Naive thymus-derived CD4-positive, alpha-beta T cell (primary cell): ENCODE measurements at regions of chr14 and their contacts with region 1.

Region 1: GRCh38 chr14:89767861-89768268 is 186.7 kb downstream of the EFCAB11 start:
- DNase-seq: peak; percentile 14 to 77 (median 66)
- ATAC-seq: peak; percentile 95
- H3K4me3 ChIP-seq: no peak overlapping the region
- H3K4me3 Mint-ChIP-seq: peak overlapping the region in 9 of 10 donors; percentile 39 to 79 (median 72)
- H3K27ac ChIP-seq: no peak overlapping the region
- H3K27ac Mint-ChIP-seq: peak overlapping the region; percentile 45 to 92 (median 85)
- H3K4me1 ChIP-seq: peaks cover 8 to 21% of the 10 kb centered on the region in 2 donors
- H3K4me1 Mint-ChIP-seq: peaks cover 24 to 60% (median 44%) of the 10 kb centered on the region in 7 donors
- H3K27me3 ChIP-seq: no peaks in the 10 kb centered on the region
- H3K27me3 Mint-ChIP-seq: peaks cover 0 to 10% (median 0%) of the 10 kb centered on the region in 5 donors

Region 2: DNA sequence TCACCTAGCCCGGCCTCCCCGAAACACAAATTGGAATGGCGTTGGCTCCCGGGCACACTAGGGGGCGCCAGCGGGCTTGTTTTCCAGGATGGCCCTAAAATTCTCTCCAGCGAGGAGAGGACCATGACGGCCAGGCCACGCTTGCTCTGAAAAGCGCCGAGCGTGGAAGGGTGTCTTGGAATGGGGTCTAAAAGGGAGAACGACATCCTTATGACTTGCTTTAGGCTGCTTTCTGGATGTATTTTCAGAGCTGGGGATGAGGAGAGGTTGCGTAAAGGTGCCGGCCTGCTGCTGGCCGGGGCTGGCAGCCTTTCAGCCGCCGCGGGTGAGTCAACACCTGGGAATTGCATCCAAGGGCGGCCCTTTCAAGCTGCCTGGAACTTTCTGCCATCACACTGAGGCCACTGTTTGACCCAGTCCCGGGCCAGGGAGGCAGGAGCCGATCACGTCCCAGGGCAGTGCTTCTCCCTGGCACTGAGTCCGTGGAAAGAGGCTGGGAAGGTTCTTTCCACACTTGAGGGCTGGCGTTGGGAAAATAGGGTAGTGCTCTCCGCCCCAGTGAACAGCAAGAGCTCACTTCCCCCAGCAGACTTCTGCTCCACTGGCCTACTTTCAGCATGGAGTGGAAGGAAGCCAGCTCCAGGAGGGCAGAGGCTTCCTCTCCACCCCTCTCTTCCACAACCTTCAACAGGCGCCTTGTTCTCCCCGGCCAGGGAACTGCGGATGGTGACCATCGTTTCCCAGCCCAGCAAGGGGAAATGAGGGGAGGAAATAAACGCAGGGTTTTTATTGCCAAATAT is 727.2 kb before region 1 on chr14:
- CTCF ChIA-PET with region 1: interaction called, 3 read pairs
- POLR2A ChIA-PET with region 1: no interaction called
- intact Hi-C with region 1: loop called (anchors 1 kb)
- DNase-seq: peak; percentile 54 to 84 (median 71)
- ATAC-seq: peak; percentile 88
- H3K4me3 ChIP-seq: peak overlapping the region; percentile 48
- H3K4me3 Mint-ChIP-seq: peak overlapping the region; percentile 59 to 89 (median 74)
- H3K27ac ChIP-seq: no peak overlapping the region
- H3K27ac Mint-ChIP-seq: no peak overlapping the region
- H3K4me1 ChIP-seq: peaks cover 6 to 10% of the 10 kb centered on the region in 2 donors
- H3K4me1 Mint-ChIP-seq: peaks cover 0 to 16% (median 13%) of the 10 kb centered on the region in 7 donors
- H3K27me3 ChIP-seq: peaks cover 0 to 3% of the 10 kb centered on the region in 2 donors
- H3K27me3 Mint-ChIP-seq: peaks cover 23 to 36% (median 27%) of the 10 kb centered on the region in 5 donors

Region 3: GRCh38 chr14:89336338-89336737 is 431.5 kb before region 1 on chr14:
- CTCF ChIA-PET with region 1: no interaction called
- POLR2A ChIA-PET with region 1: no interaction called
- intact Hi-C with region 1: loop called in 1 of 2 experiments (anchors 1 kb)
- DNase-seq: no peak
- ATAC-seq: no peak
- H3K4me3 ChIP-seq: no peak overlapping the region
- H3K4me3 Mint-ChIP-seq: no peak overlapping the region
- H3K27ac ChIP-seq: no peak overlapping the region
- H3K27ac Mint-ChIP-seq: peak overlapping the region in 4 of 9 donors; percentile 3 to 60 (median 28)
- H3K4me1 ChIP-seq: peaks cover 0 to 6% of the 10 kb centered on the region in 2 donors
- H3K4me1 Mint-ChIP-seq: peaks cover 22 to 66% (median 54%) of the 10 kb centered on the region in 7 donors
- H3K27me3 ChIP-seq: no peaks in the 10 kb centered on the region
- H3K27me3 Mint-ChIP-seq: no peaks in the 10 kb centered on the region

Region 4: DNA sequence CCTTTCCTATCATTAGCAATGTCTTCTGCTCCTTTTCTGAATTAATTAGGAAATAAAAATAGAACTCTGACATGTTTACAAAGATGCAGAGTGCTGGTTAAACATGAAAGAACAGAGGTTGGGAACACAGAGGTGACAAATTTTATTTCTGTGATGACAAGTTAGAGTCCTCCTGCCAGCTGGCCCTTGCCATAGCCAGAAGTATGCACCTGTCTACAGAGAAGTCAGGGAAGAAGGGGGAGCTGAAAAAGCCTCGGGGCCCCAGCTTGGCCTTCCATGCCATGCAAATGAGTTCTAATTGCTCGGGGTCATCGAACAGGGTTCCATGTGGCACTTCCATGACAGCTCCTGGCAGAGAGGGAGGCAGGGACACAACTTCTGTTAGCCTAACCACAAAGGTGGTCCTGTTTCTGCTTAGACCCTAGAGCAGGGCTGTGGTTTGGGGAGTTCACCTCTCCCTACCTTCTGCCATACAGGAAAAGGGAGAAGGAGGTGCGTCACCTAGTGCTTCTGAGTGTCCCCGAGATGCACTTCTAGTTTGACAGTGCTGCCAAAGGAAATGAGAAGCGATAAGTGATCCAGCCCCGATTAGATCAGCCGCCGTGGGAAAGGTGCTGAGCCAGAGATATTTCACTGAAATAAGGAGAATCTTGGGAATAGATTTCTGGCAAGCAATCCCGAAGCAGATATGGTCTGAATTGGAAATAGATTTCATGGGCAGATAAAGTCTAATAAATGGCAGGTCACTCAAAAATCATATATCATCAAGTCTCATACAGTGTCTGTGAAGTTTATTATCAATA is 195.1 kb before region 1 on chr14:
- CTCF ChIA-PET with region 1: no interaction called
- POLR2A ChIA-PET with region 1: no interaction called
- intact Hi-C with region 1: loop called in 1 of 2 experiments (anchors 5 kb)
- DNase-seq: no peak
- ATAC-seq: no peak
- H3K4me3 ChIP-seq: no peak overlapping the region
- H3K4me3 Mint-ChIP-seq: peak overlapping the region in 2 of 10 donors; percentile 8 to 14
- H3K27ac ChIP-seq: no peak overlapping the region
- H3K27ac Mint-ChIP-seq: peak overlapping the region in 5 of 9 donors; percentile 3 to 63 (median 5)
- H3K4me1 ChIP-seq: peaks cover 0 to 11% of the 10 kb centered on the region in 2 donors
- H3K4me1 Mint-ChIP-seq: peaks cover 12 to 91% (median 78%) of the 10 kb centered on the region in 7 donors
- H3K27me3 ChIP-seq: no peaks in the 10 kb centered on the region
- H3K27me3 Mint-ChIP-seq: no peaks in the 10 kb centered on the region

Region 5: GRCh38 chr14:89720741-89721315 is 47.0 kb before region 1 on chr14:
- CTCF ChIA-PET with region 1: interaction called, 21 read pairs
- POLR2A ChIA-PET with region 1: interaction called, 25 read pairs
- intact Hi-C with region 1: loop called (anchors 1 to 2 kb)
- DNase-seq: peak; percentile 43 to 91 (median 88)
- ATAC-seq: peak; percentile 96
- H3K4me3 ChIP-seq: peak overlapping the region; percentile 43
- H3K4me3 Mint-ChIP-seq: peak overlapping the region; percentile 65 to 81 (median 73)
- H3K27ac ChIP-seq: peak overlapping the region; percentile 70
- H3K27ac Mint-ChIP-seq: peak overlapping the region; percentile 94 to 99 (median 98)
- H3K4me1 ChIP-seq: peaks cover 76 to 78% of the 10 kb centered on the region in 2 donors
- H3K4me1 Mint-ChIP-seq: peaks cover 68 to 99% (median 92%) of the 10 kb centered on the region in 7 donors
- H3K27me3 ChIP-seq: no peaks in the 10 kb centered on the region
- H3K27me3 Mint-ChIP-seq: no peaks in the 10 kb centered on the region

Region 6: DNA sequence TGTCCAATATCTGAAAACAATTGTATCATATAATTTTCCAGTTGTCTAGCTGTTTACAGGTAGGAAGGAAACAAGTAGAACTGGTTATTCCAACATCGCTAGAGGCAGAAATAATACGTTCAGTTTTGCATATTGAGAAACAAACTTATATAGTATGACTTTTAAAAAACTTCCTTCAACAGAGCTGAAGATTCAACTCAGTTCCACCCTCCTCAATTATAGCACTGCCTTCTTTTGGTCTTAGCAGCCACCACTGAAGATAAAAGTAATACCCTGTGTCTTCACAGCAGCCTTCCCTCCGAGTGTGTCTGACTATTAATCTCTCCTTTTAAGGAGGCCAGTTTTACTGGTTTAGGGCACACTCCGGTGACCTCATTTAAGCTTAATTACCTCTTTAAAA is 27.6 kb before region 1 on chr14:
- CTCF ChIA-PET with region 1: no interaction called
- POLR2A ChIA-PET with region 1: no interaction called
- intact Hi-C with region 1: no loop called
- DNase-seq: no peak
- ATAC-seq: no peak
- H3K4me3 ChIP-seq: no peak overlapping the region
- H3K4me3 Mint-ChIP-seq: no peak overlapping the region
- H3K27ac ChIP-seq: no peak overlapping the region
- H3K27ac Mint-ChIP-seq: peak overlapping the region in 1 of 9 donors; percentile 28
- H3K4me1 ChIP-seq: peaks cover 0 to 7% of the 10 kb centered on the region in 2 donors
- H3K4me1 Mint-ChIP-seq: peaks cover 3 to 33% (median 23%) of the 10 kb centered on the region in 7 donors
- H3K27me3 ChIP-seq: no peaks in the 10 kb centered on the region
- H3K27me3 Mint-ChIP-seq: peaks cover 0 to 4% (median 0%) of the 10 kb centered on the region in 5 donors